Ascending aorta (tissue), 2 donors: ENCODE measurements at regions of chr11 and their contacts with region 1.

Region 1: DNA sequence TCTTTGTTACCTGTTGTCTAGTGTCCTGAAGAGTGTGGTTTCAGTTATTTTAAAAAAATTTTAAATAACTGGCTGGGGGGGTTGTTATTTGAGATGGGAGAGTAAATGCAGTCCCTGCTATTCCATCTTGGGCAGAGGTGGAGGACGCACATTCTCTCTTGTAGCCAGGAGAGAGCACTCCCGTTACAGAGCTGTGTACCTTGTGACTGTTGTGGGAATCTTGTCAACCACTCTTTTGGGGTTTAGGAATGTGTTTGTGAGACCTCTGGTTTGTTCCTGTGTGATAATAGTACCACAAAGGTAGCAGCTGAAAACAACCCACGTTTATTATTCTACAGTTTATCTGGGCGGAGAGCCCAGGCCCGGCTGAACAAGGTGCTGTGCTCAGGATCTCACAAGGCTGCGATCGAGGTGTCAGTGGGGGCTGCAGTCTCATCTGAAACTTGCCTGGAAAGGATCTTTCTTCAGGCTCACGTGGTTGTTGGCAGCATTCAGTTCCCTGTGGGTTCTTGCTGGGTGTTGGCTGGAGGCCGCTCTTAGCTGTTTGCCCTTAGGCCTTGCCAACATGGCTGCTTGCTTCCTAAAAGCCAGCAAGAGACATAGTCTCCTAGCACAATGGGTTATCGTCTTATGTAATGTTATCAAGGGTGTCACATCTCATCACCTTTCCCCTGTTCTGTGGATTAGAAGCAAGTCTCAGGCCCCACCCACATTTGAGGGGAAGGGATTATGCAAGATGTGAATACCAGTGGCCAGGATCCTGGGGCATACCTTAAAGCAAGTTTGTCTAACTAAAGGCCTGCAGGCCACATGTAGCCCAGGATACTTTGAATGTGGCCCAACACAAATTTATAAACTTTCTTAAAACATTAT is 20.6 kb downstream of the IGHMBP2 start:
- DNase-seq: no peak
- H3K4me3 ChIP-seq: no peak overlapping the region
- H3K27ac ChIP-seq: peak overlapping the region; percentile 70 to 78
- H3K4me1 ChIP-seq: peaks cover 15 to 33% of the 10 kb centered on the region in 2 donors
- H3K27me3 ChIP-seq: no peaks in the 10 kb centered on the region
- CTCF ChIP-seq: no peak

Region 2: DNA sequence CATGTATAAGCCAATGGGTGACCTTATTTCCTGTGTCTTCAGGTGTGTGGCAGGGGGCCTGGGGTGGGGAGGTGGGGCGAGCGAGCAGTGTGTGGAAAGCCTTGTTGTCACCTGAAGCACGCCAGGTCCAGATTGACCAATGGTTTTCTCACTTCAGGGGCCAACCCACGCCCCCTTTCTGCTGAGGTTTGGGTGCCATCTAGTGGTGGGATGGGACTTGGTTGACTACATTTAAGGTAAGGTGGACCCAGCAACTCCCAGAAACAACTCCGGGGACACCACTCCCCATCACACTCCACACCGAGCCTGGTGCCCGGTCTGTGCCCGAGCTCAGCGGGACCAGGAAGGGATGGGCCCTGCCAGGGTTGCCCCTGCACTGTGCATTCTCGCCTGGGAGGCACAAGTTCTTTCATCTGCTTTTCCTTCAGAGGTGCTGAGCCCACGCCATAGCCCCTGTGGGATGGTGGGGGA is 164.4 kb after region 1 on chr11:
- intact Hi-C with region 1: loop called (anchors 5 kb)
- DNase-seq: peak in 1 of 2 donors; percentile 79
- H3K4me3 ChIP-seq: no peak overlapping the region
- H3K27ac ChIP-seq: no peak overlapping the region
- H3K4me1 ChIP-seq: no peaks in the 10 kb centered on the region
- H3K27me3 ChIP-seq: no peaks in the 10 kb centered on the region
- CTCF ChIP-seq: peak; percentile 64 to 82 (median 74)